ENCODE measurements at regions of chrX and their contacts with region 1.

Region 1: GRCh38 chrX:41333744-41334259 is at the start of gene DDX3X:
- DNase-seq: peak; percentile 69 to 95 (median 91)
- ATAC-seq: peak; percentile 73
- H3K4me3 ChIP-seq: peak within 1 kb of the TSS; percentile 91
- H3K4me3 Mint-ChIP-seq: peak within 1 kb of the TSS; percentile 92 to 99 (median 96)
- H3K27ac ChIP-seq: peak within 1 kb of the TSS; percentile 100
- H3K27ac Mint-ChIP-seq: peak within 1 kb of the TSS; percentile 99 to 100 (median 100)
- H3K4me1 ChIP-seq: peaks cover 8 to 16% of the 10 kb centered on the region in 2 donors
- H3K4me1 Mint-ChIP-seq: peaks cover 12 to 65% (median 29%) of the 10 kb centered on the region in 7 donors
- H3K27me3 ChIP-seq: no peaks in the 10 kb centered on the region
- H3K27me3 Mint-ChIP-seq: peaks cover 0 to 6% (median 0%) of the 10 kb centered on the region in 5 donors
- total RNA-seq, gene DDX3X: 281 to 790 (median 296) TPM

Region 2: DNA sequence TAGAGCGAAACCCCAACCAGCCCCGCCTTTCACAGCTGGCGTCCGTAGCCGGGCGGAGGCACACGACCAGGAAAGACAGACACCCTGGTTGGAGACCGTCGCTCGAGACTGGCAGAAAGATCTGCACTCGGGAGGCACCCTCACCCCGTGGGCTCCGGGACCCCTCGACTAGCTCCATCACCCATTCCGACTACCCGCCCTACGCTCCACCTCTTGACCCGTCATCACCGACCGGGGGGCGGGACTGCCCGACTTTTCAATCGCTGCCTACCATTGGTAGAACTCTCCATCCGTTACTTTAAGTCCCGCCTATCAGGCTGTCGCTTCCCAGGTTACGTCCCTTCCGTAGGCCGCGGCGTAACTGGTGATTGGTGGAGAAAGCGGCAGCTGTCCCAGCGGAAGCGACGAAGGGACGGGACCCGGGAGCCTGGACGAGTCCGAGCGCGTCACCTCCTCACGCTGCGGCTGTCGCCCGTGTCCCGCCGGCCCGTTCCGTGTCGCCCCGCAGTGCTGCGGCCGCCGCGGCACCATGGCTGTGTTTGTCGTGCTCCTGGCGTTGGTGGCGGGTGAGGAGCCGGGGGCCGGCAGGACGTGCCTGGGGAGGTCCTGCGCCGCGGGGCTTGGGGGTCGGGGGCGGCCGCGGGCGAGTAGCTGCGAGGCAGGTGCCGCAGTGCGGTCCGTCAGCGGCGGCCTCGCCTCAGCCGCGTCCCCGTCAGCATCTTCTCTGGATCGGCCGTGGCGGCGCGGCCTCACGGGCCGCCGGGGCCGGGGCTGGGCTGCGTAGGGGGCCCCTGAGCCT is 753.1 kb before region 1 on chrX and contains the start of gene ATP6AP2:
- CTCF ChIA-PET with region 1: no interaction called
- POLR2A ChIA-PET with region 1: interaction called, 3 read pairs
- intact Hi-C with region 1: loop called in 1 of 2 experiments (anchors 2 kb)
- DNase-seq: peak; percentile 60 to 91 (median 88)
- ATAC-seq: peak; percentile 96
- H3K4me3 ChIP-seq: peak within 1 kb of the TSS; percentile 81
- H3K4me3 Mint-ChIP-seq: peak within 1 kb of the TSS; percentile 92 to 98 (median 94)
- H3K27ac ChIP-seq: peak within 1 kb of the TSS; percentile 90
- H3K27ac Mint-ChIP-seq: peak within 1 kb of the TSS; percentile 87 to 96 (median 95)
- H3K4me1 ChIP-seq: peaks cover 13 to 16% of the 10 kb centered on the region in 2 donors
- H3K4me1 Mint-ChIP-seq: peaks cover 21 to 38% (median 34%) of the 10 kb centered on the region in 7 donors
- H3K27me3 ChIP-seq: no peaks in the 10 kb centered on the region
- H3K27me3 Mint-ChIP-seq: no peaks in the 10 kb centered on the region
- total RNA-seq, gene ATP6AP2: 72.0 to 98.6 (median 82.5) TPM

Region 3: DNA sequence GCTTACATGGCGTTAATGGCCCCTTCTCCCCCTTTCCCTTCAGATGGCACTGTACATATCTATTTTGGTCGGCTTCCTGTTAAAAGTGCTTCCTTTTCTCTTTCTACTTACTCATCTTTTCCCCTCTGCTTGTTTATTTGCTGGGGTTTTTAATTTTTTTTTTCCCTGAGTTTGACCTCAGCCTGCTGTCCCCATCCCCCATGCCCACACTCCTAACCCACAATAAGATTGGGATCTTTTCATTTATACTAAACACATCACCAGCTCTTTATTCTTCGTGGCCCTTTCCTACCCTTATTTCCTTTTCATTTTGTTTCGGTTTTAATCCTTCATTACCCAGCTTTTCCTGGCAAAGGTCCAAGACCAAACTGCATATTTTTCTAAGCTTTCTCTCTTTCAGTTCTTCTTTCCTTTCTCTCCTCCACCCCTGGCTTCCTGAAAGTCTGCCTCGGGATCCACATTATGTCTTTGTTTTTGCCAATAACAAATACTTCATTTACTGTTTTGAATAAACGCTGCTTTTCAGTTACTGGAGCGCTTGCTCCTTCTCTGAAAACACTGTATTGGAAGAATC is 400.6 kb before region 1 on chrX:
- CTCF ChIA-PET with region 1: no interaction called
- POLR2A ChIA-PET with region 1: no interaction called
- intact Hi-C with region 1: no loop called
- DNase-seq: peak in 7 of 9 donors; percentile 10 to 37 (median 27)
- ATAC-seq: peak; percentile 38
- H3K4me3 ChIP-seq: peak overlapping the region; percentile 51
- H3K4me3 Mint-ChIP-seq: peak overlapping the region; percentile 79 to 91 (median 88)
- H3K27ac ChIP-seq: peak overlapping the region; percentile 59
- H3K27ac Mint-ChIP-seq: peak overlapping the region; percentile 82 to 97 (median 94)
- H3K4me1 ChIP-seq: peaks cover 0 to 10% of the 10 kb centered on the region in 2 donors
- H3K4me1 Mint-ChIP-seq: peaks cover 9 to 34% (median 22%) of the 10 kb centered on the region in 7 donors
- H3K27me3 ChIP-seq: no peaks in the 10 kb centered on the region
- H3K27me3 Mint-ChIP-seq: no peaks in the 10 kb centered on the region

Region 4: DNA sequence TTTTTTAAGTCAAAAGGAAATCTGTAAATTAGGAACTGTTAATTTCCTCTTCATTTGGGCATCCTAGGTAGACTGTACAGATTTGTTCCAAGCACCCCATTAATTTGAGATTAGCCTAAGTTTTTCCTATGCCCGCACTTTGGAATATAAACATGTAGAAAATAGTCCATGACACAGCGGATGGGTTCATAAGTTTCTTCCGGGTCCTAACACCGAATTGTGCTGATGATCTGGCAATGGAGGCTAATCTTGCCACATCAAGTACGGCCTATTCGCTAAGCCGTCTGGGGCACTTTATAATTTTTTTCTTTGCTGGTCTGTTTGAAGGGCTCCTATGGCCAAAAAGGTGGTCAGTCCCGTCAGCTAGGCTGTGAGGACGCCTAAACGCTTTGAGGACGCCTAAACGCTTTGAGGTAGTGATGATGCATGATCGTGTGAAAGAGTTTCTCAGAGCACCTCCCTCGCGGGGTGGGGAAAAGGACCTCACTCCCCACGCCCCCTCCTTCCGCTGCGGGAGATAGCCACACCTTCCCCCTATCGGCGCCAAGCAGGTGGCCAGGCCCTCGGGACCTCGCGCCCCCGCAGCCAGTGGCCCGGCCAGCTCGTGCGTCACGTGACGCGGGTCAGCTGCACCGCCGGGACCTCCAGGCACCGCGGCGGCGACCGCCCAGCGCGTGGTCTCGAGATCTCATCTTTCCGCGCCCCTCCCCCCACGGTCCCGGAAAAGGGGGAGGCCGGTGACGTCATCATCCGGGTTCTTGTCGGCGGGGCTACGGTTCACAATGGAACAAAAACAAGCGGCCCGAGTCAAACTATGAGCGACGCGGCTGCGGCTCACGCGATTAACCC is 249.5 kb before region 1 on chrX:
- CTCF ChIA-PET with region 1: no interaction called
- POLR2A ChIA-PET with region 1: interaction called, 7 read pairs
- intact Hi-C with region 1: loop called in 1 of 2 experiments (anchors 1 kb)
- DNase-seq: peak; percentile 89 to 100 (median 98)
- ATAC-seq: peak; percentile 81
- H3K4me3 ChIP-seq: peak overlapping the region; percentile 97
- H3K4me3 Mint-ChIP-seq: peak overlapping the region; percentile 86 to 98 (median 94)
- H3K27ac ChIP-seq: peak overlapping the region; percentile 99
- H3K27ac Mint-ChIP-seq: peak overlapping the region; percentile 96 to 100 (median 99)
- H3K4me1 ChIP-seq: peaks cover under 1 to 7% of the 10 kb centered on the region in 2 donors
- H3K4me1 Mint-ChIP-seq: peaks cover 7 to 40% (median 17%) of the 10 kb centered on the region in 7 donors
- H3K27me3 ChIP-seq: no peaks in the 10 kb centered on the region
- H3K27me3 Mint-ChIP-seq: no peaks in the 10 kb centered on the region

Region 5: GRCh38 chrX:41350976-41351569 is 17.3 kb after region 1 on chrX:
- CTCF ChIA-PET with region 1: no interaction called
- POLR2A ChIA-PET with region 1: interaction called, 37 read pairs
- intact Hi-C with region 1: loop called in 1 of 2 experiments (anchors 1 kb)
- DNase-seq: no peak
- ATAC-seq: peak; percentile 45
- H3K4me3 ChIP-seq: no peak overlapping the region
- H3K4me3 Mint-ChIP-seq: peak overlapping the region in 3 of 10 donors; percentile 2 to 11 (median 8)
- H3K27ac ChIP-seq: no peak overlapping the region
- H3K27ac Mint-ChIP-seq: peak overlapping the region in 8 of 9 donors; percentile 44 to 93 (median 74)
- H3K4me1 ChIP-seq: peaks cover 0 to 11% of the 10 kb centered on the region in 2 donors
- H3K4me1 Mint-ChIP-seq: peaks cover 5 to 56% (median 37%) of the 10 kb centered on the region in 7 donors
- H3K27me3 ChIP-seq: no peaks in the 10 kb centered on the region
- H3K27me3 Mint-ChIP-seq: no peaks in the 10 kb centered on the region

Region 6: GRCh38 chrX:41441934-41442823 is 108.4 kb after region 1 on chrX:
- CTCF ChIA-PET with region 1: no interaction called
- POLR2A ChIA-PET with region 1: interaction called, 7 read pairs
- intact Hi-C with region 1: loop called (anchors 1 kb)
- DNase-seq: peak; percentile 79 to 96 (median 87)
- ATAC-seq: peak; percentile 99
- H3K4me3 ChIP-seq: peak overlapping the region; percentile 60
- H3K4me3 Mint-ChIP-seq: peak overlapping the region; percentile 45 to 76 (median 68)
- H3K27ac ChIP-seq: no peak overlapping the region
- H3K27ac Mint-ChIP-seq: peak overlapping the region in 6 of 9 donors; percentile 28 to 89 (median 53)
- H3K4me1 ChIP-seq: no peaks in the 10 kb centered on the region
- H3K4me1 Mint-ChIP-seq: peaks cover 0 to 20% (median 5%) of the 10 kb centered on the region in 7 donors
- H3K27me3 ChIP-seq: no peaks in the 10 kb centered on the region
- H3K27me3 Mint-ChIP-seq: no peaks in the 10 kb centered on the region

Region 7: GRCh38 chrX:42943051-42943974 is 1609.5 kb after region 1 on chrX:
- CTCF ChIA-PET with region 1: no interaction called
- POLR2A ChIA-PET with region 1: no interaction called
- intact Hi-C with region 1: loop called in 1 of 2 experiments (anchors 10 kb)
- DNase-seq: peak in 6 of 9 donors; percentile 22 to 50 (median 44)
- ATAC-seq: peak; percentile 60
- H3K4me3 ChIP-seq: peak overlapping the region; percentile 33
- H3K4me3 Mint-ChIP-seq: peak overlapping the region; percentile 41 to 83 (median 70)
- H3K27ac ChIP-seq: peak overlapping the region; percentile 56
- H3K27ac Mint-ChIP-seq: peak overlapping the region; percentile 77 to 98 (median 94)
- H3K4me1 ChIP-seq: peaks cover 58 to 84% of the 10 kb centered on the region in 2 donors
- H3K4me1 Mint-ChIP-seq: peaks cover 21 to 98% (median 88%) of the 10 kb centered on the region in 7 donors
- H3K27me3 ChIP-seq: no peaks in the 10 kb centered on the region
- H3K27me3 Mint-ChIP-seq: no peaks in the 10 kb centered on the region

Measured in naive thymus-derived CD4-positive, alpha-beta T cell (primary cell).